ENCODE measurements at regions of chr10 and their contacts with region 1.

Region 1: GRCh38 chr10:80453701-80454513 is at the start of gene TSPAN14:
- DNase-seq: peak; percentile 90 to 95
- ATAC-seq: peak; percentile 93
- H3K4me3 ChIP-seq: peak within 1 kb of the TSS; percentile 73 to 94
- H3K27ac ChIP-seq: peak within 1 kb of the TSS; percentile 65 to 83
- H3K4me1 ChIP-seq: no peaks in the 10 kb centered on the region
- H3K27me3 ChIP-seq: no peaks in the 10 kb centered on the region
- total RNA-seq, gene TSPAN14: 59.5 to 61.5 TPM

Region 2: DNA sequence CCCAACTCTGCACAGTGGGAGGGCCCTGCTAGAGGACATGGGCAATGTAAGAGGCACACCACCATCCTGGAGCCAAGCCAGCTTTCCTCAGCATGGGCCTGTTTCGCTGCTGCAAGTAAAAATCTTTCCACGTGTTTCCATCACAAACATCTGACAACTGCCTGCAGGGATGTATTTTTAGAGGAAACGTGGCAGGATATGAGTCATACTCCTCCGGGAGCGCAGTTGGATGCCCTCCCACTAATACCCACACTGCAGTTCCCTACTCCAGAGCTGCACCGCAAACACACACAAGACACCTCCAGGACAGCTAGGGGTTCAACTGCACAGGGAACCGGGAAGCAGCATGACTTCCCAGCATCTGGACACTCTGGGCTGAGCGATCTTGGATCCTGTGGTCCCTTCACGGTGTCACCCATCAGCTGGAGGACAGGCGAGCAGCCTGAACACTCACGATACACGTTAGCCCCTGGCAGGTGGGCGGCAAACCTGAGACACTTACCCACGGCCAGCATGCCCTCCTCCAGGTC is 295.2 kb before region 1 on chr10:
- intact Hi-C with region 1: no loop called
- DNase-seq: peak; percentile 94 to 96
- ATAC-seq: peak; percentile 93
- H3K4me3 ChIP-seq: no peak overlapping the region
- H3K27ac ChIP-seq: peak overlapping the region; percentile 16 to 96
- H3K4me1 ChIP-seq: peaks cover 11% of the 10 kb centered on the region in 2 donors
- H3K27me3 ChIP-seq: no peaks in the 10 kb centered on the region

Region 3: DNA sequence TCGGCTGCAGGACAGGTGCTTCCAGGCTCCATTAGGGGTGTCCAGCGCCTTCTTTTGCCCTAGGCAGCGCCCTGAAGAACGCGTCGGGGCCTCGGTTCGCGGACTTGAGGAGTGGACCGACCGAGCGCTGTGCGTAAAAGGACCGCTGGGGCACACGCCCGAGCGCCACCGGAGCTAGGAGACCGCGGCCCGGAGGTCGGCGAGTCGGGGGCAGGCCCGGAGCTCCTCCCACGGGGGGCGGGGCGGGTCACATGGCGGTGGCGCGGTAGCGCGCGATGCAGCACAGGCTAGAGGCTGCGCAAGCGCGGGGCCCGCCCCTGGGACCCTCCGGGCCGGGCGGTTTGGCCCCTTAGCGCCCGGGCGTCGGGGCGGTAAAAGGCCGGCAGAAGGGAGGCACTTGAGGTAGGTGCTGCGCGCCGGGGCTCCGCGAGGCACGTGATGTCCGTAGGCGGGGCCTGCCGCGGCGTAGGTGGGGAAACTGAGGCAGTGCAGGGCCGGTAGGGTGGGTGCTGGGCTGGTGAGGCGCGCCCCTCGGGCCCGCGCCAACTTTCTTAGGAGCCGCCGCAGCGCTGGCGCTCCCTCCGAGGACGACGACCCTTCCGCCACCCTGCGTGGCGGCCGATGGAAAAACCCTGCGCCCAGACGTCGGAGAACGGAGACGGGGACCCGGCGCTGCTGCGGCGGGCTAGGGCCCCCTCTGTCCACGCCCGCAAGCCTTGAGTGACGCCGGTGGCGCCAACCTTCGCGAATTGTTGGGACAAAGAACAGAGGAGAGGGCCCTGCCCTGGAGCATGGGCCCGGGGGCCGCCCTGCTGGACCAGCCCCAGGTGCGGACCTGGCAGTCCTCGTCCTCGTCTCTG is 45.4 kb before region 1 on chr10 and contains the start of gene PRXL2A:
- intact Hi-C with region 1: loop called in 1 of 2 experiments (anchors 2 kb)
- DNase-seq: peak; percentile 91 to 95
- ATAC-seq: peak; percentile 94
- H3K4me3 ChIP-seq: peak within 1 kb of the TSS; percentile 71 to 76
- H3K27ac ChIP-seq: peak within 1 kb of the TSS in 1 of 2 donors; percentile 4
- H3K4me1 ChIP-seq: no peaks in the 10 kb centered on the region
- H3K27me3 ChIP-seq: no peaks in the 10 kb centered on the region
- total RNA-seq, gene PRXL2A: 39.7 to 43.1 TPM

Region 4: DNA sequence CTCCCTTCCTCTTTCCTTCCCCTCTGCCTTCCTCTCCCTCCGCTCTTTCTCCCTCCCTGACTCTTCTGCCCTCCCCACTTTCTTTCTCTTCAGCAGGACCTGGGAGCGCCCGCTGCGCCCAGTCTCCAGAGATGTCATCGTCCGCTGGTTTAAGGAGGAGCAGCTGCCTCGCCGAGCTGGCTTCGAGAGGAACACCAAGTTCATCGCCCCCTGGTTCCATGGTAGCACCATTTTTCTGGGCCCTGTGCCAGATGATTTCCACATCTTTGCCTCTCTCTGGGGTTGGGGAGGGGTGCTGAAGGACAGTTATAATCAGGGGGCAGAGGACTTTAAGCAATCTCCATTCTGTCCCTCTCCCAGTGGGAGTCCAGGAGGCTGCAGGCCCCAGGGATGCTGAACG is 155.4 kb after region 1 on chr10:
- intact Hi-C with region 1: no loop called
- DNase-seq: no peak
- ATAC-seq: no peak
- H3K4me3 ChIP-seq: no peak overlapping the region
- H3K27ac ChIP-seq: no peak overlapping the region
- H3K4me1 ChIP-seq: no peaks in the 10 kb centered on the region
- H3K27me3 ChIP-seq: no peaks in the 10 kb centered on the region

Measured in aorta (tissue), 5 donors.